Activated T-helper 1 cell treated with anti-CD3 and anti-CD28 coated beads, Interleukin-12 subunit alpha, Interleukin-12 subunit beta, Interleukin-2, Interleukin-4 antibody, amounts not matched to agents 30 ng/mL and 10 ng/mL and 1 ng/mL, durations not matched to agents 14 hours and 24 hours and 36 hours (primary cell): ENCODE measurements at regions of chr3 and their contacts with region 1.

Region 1: DNA sequence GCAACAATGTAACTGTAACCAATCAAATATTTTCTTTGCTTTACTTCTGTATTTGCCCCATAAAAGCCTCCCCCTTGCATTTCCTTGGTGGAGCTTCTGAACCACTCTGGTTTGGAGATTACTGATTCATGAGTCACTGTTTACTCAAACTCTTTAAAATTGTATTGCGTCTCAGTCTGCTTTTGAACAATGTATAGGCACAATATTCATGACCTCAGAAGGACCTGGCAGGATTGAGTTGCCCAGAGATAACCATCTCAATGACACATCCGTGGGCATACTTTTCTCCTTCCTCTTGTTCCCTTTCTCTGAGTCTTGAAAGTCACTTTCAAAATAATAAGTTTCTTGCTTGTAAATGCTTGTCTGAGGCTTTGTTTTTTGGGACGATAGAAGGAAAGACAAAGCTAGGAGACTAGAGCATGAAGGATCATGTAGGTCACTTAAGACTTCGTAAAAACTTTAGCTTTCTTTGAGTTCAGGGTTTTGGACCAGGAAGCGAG is 57.1 kb upstream of the POU1F1 start:
- DNase-seq: no peak
- H3K4me3 Mint-ChIP-seq: no peak overlapping the region
- H3K27ac Mint-ChIP-seq: peak overlapping the region; percentile 67
- H3K4me1 Mint-ChIP-seq: peaks cover 17% of the 10 kb centered on the region
- H3K27me3 Mint-ChIP-seq: no peaks in the 10 kb centered on the region

Region 2: DNA sequence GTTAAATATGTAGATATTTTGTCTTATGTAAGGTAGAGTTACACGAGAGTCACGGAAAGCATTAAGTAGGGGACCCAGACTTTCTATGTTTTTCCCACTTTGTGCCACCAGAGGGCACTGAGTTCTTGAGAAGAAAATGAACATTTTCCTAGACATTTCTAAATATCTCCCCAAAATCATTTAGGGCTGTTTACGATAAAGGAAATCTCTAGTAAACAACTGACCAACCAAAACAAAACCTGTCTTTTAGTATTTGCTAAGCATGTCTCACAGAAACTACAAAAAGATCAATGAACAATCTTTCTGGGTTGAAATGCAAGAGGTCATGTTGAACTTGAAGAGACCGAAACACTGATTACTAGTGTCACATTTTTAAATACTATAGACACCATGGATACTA is 73.2 kb before region 1 on chr3:
- intact Hi-C with region 1: loop called (anchors 2 kb)
- DNase-seq: no peak
- H3K4me3 Mint-ChIP-seq: no peak overlapping the region
- H3K27ac Mint-ChIP-seq: no peak overlapping the region
- H3K4me1 Mint-ChIP-seq: peaks cover 7% of the 10 kb centered on the region
- H3K27me3 Mint-ChIP-seq: peaks cover 8% of the 10 kb centered on the region

Region 3: DNA sequence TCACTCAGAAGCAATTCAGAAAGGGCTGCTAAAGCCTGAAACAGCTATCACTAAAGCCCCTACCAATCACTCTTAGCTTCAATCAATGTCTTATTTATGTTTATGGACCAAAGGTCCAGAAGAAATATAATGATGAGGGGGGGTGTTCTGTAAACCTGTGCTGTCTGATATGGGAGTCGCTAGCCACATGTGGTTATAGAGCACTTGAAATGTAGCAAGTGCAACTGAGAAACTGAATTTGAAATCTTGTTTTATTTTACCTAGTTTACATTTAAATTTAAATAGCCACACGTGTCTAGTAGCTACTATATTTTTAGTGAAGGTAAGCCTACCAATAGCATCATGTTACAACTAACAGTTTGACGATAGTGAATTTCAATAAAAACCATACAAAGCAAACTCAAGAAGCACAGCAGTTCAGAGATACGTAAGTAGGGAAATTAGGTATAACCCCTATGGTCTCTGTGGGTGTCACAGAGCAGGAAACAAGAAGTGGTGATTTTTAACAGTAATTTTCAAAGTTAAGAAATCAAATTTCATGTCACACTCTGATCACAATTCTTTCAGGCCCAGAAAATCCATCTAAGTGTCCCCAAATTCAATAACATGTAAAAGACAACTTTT is 60.6 kb before region 1 on chr3:
- intact Hi-C with region 1: loop called (anchors 1 kb)
- DNase-seq: no peak
- H3K4me3 Mint-ChIP-seq: no peak overlapping the region
- H3K27ac Mint-ChIP-seq: no peak overlapping the region
- H3K4me1 Mint-ChIP-seq: peaks cover 51% of the 10 kb centered on the region
- H3K27me3 Mint-ChIP-seq: peaks cover 2% of the 10 kb centered on the region

Region 4: DNA sequence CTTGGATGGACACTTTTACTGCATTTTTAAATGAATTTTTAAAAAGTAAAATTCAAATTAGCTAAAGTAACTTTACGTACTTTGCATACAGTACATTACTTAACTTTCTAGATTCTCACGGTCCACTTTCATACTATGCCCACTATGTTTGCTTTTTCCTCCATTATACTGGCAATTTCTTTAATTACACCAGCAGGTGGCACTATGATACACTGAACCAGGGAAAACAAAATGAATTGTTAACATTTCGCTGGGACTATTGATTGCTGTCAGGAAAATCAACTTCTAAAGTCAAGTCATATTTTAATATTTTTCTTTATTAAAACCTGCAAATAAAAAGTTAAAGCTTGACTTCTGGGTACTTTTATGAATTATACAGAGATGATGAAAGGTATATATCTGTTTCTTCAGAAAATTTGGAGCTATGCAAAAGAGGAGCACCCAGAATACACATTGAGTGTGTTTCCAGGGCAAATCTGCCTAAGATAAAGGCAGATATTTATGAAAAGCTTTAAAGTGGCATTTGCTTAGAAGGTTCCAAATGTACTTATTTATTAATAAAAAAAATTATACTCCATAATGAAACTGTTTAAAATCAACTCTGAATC is 35.2 kb before region 1 on chr3:
- intact Hi-C with region 1: loop called (anchors 5 kb)
- DNase-seq: no peak
- H3K4me3 Mint-ChIP-seq: no peak overlapping the region
- H3K27ac Mint-ChIP-seq: no peak overlapping the region
- H3K4me1 Mint-ChIP-seq: no peaks in the 10 kb centered on the region
- H3K27me3 Mint-ChIP-seq: peaks cover 11% of the 10 kb centered on the region

Region 5: DNA sequence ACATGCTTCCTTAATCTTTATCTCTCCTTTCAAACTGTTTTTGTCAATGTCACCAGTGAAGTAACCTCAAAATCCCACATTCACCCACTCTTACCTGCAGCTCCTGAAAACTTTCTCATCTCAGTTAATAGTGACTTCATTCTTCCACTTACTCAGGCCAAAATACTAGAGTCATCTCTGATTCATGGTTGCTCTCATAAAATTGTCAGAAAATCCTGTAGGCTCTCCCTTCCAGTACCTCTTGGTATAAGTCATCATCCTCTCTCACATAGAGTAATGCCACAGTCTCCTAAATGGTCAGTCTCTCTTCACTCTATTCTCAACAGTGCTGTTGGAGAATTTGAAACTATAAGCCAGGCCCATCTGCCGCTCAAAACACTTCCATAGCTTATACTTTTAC is 22.1 kb before region 1 on chr3:
- intact Hi-C with region 1: loop called (anchors 1 kb)
- DNase-seq: no peak
- H3K4me3 Mint-ChIP-seq: no peak overlapping the region
- H3K27ac Mint-ChIP-seq: no peak overlapping the region
- H3K4me1 Mint-ChIP-seq: no peaks in the 10 kb centered on the region
- H3K27me3 Mint-ChIP-seq: no peaks in the 10 kb centered on the region